ENCODE measurements at regions of chr2 and their contacts with region 1.

Region 1: GRCh38 chr2:86221066-86221684 is 21.9 kb downstream of the MRPL35 start:
- DNase-seq: peak; percentile 84
- H3K4me3 Mint-ChIP-seq: no peak overlapping the region
- H3K27ac Mint-ChIP-seq: no peak overlapping the region
- H3K4me1 Mint-ChIP-seq: peaks cover 27% of the 10 kb centered on the region
- H3K27me3 Mint-ChIP-seq: no peaks in the 10 kb centered on the region

Region 2: DNA sequence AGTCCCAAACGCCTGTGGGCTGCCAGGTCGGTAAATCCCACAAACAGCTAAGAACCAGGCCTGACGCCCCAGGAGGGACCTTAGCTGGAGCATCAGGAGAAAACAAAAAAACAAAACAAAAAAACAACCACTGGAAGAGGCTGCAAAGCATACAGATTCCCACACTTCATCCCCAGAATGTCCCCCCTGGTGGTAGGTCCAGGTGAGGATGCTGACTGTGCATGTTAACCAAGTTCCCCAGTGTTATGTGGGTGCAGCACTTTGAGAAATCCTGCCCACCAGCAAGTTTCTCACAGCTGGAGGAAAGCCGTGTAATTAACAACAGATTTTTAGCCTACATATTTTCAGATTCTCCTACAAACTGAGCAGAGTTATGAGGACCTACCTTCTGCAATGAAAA is 347.5 kb before region 1 on chr2:
- intact Hi-C with region 1: no loop called
- DNase-seq: no peak
- H3K4me3 Mint-ChIP-seq: no peak overlapping the region
- H3K27ac Mint-ChIP-seq: no peak overlapping the region
- H3K4me1 Mint-ChIP-seq: peaks cover 30% of the 10 kb centered on the region
- H3K27me3 Mint-ChIP-seq: no peaks in the 10 kb centered on the region

Region 3: GRCh38 chr2:86298411-86299379 is 77.5 kb after region 1 on chr2:
- intact Hi-C with region 1: loop called (anchors 10 kb)
- DNase-seq: no peak
- H3K4me3 Mint-ChIP-seq: no peak overlapping the region
- H3K27ac Mint-ChIP-seq: no peak overlapping the region
- H3K4me1 Mint-ChIP-seq: no peaks in the 10 kb centered on the region
- H3K27me3 Mint-ChIP-seq: peaks cover 23% of the 10 kb centered on the region

Region 4: DNA sequence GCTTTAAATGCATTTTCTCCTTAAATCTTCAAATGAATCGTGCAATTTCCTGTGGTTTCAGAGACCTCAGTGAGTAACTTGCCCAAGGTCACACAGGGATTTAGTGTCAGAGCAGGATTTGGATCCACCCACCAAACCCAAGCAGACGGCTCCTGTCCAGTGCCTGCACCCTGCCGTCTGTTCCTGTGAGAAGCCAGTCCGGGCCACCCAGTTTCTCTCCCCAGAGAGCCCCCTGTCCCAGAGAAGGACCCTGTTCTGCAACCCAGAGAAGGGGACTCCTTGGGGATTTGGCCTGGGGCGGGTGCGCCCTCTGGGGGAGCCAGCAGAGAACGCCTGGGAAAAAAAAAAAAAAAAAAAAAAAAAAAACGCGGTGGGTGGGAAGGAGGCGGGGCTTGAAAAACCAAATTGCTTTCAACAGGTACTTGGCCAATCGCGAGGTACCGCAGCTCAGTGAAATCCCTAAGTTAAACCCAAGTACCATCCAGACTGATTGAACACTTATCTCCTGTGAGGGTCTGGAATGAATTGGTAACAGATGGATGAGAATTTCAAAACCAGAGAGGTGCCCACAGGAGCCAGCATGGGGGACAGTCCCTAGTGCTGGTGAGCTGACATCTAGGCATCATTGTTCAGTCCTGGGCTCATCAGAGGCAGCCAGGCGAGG is 147.1 kb after region 1 on chr2:
- intact Hi-C with region 1: loop called (anchors 1 kb)
- DNase-seq: peak; percentile 80
- H3K4me3 Mint-ChIP-seq: peak overlapping the region; percentile 31
- H3K27ac Mint-ChIP-seq: peak overlapping the region; percentile 25
- H3K4me1 Mint-ChIP-seq: peaks cover 24% of the 10 kb centered on the region
- H3K27me3 Mint-ChIP-seq: peaks cover 1% of the 10 kb centered on the region